ENCODE measurements at regions of chr1 and their contacts with region 1.

Region 1: DNA sequence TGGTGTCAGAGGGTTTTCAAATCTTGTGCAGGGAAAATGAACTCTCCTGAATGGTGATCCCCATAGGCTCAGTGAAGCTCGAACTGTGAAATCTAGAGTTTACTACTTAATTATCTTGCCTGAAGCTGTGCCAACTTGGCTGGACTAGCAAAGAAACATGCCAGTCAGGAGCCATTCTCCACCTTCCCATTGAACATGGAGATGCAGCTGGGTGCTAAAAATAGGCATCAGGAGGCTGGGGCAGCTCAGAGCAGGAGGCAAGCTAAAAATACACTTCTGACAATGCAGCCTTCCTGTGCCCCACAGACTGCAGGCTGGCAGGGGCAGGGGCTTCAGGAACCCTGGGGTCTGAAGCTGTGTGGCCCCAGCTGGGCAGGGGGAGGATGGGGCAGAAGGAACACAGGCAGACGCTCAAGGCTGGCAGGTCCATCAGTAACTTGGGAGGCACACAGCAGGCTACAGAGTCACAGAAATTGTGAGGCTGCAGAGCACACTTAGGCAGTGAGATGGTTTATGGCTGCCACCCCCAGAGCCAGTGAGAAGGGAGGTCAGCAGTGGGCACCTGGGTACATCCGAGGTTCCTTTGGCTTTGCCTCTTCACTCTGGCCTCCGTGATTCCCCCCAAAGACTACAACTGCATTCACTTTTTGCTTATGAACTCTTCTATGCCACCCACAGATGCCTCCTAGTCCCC is 155.4 kb upstream of the KCND3 start:
- DNase-seq: no peak
- ATAC-seq: no peak
- H3K4me3 ChIP-seq: no peak overlapping the region
- H3K4me3 Mint-ChIP-seq: no peak overlapping the region
- H3K27ac ChIP-seq: no peak overlapping the region
- H3K27ac Mint-ChIP-seq: no peak overlapping the region
- H3K4me1 ChIP-seq: no peaks in the 10 kb centered on the region
- H3K4me1 Mint-ChIP-seq: no peaks in the 10 kb centered on the region
- H3K27me3 ChIP-seq: peaks cover 0 to 3% of the 10 kb centered on the region in 2 experiments
- H3K27me3 Mint-ChIP-seq: peaks cover 35% of the 10 kb centered on the region
- CTCF ChIP-seq: no peak

Region 2: GRCh38 chr1:112165375-112165774 is 20.5 kb after region 1 on chr1:
- CTCF ChIA-PET with region 1: no interaction called
- POLR2A ChIA-PET with region 1: no interaction called
- intact Hi-C with region 1: loop called in 1 of 2 experiments (anchors 1 kb)
- DNase-seq: no peak
- ATAC-seq: no peak
- H3K4me3 ChIP-seq: no peak overlapping the region
- H3K4me3 Mint-ChIP-seq: no peak overlapping the region
- H3K27ac ChIP-seq: no peak overlapping the region
- H3K27ac Mint-ChIP-seq: no peak overlapping the region
- H3K4me1 ChIP-seq: no peaks in the 10 kb centered on the region
- H3K4me1 Mint-ChIP-seq: no peaks in the 10 kb centered on the region
- H3K27me3 ChIP-seq: no peaks in the 10 kb centered on the region
- H3K27me3 Mint-ChIP-seq: peaks cover 22% of the 10 kb centered on the region
- CTCF ChIP-seq: no peak

Measured in CD8-positive, alpha-beta T cell (primary cell).